ENCODE measurements at regions of chr5 and their contacts with region 1.

Region 1: DNA sequence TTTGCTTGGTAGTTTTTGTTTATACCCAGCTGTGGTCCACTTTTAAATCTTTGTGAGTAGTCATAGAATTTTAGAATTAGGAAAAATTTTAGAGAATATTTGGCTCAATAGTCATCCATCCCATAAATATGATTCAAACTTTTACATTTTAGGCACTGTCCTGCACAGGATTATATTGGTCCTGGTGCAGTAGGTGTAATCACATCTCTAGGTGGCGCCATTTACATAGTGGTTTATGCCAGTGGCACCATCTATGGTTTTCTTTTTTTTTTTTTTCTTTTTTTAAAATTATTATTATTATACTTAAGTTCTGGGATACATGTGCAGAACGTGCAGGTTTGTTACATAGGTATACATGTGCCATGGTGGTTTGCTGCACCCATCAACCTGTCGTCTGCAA is 260.7 kb upstream of the KCNN2 start:
- DNase-seq: peak; percentile 63
- H3K4me3 Mint-ChIP-seq: no peak overlapping the region
- H3K27ac Mint-ChIP-seq: no peak overlapping the region
- H3K4me1 Mint-ChIP-seq: no peaks in the 10 kb centered on the region
- H3K27me3 Mint-ChIP-seq: peaks cover 35% of the 10 kb centered on the region
- CTCF ChIP-seq: peak; percentile 62

Region 2: GRCh38 chr5:113612060-113612496 is 489.1 kb before region 1 on chr5:
- CTCF ChIA-PET with region 1: no interaction called
- intact Hi-C with region 1: loop called (anchors 5 kb)
- DNase-seq: no peak
- H3K4me3 Mint-ChIP-seq: no peak overlapping the region
- H3K27ac Mint-ChIP-seq: no peak overlapping the region
- H3K4me1 Mint-ChIP-seq: no peaks in the 10 kb centered on the region
- H3K27me3 Mint-ChIP-seq: peaks cover 36% of the 10 kb centered on the region
- CTCF ChIP-seq: peak; percentile 35

Region 3: DNA sequence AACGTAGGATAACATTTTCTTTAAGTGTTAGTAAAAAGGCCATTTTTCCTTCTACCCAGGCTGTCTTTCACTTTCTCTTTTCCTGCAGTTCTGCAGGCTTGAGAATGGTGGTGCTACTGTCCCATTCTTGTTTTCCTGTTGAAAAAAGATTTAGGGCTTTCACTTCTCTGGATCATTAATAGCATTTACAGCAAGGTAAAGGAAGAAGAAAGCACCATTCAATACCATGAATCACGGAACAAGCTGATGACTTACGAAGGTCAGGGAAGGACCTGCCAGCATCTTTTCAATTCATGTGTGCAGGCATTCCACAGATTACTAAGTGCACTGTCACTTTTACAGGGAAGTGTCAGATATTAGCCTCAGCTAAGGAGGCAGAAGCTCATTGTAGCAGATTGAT is 294.9 kb before region 1 on chr5:
- CTCF ChIA-PET with region 1: no interaction called
- intact Hi-C with region 1: loop called (anchors 5 kb)
- DNase-seq: peak; percentile 22
- H3K4me3 Mint-ChIP-seq: peak overlapping the region; percentile 25
- H3K27ac Mint-ChIP-seq: no peak overlapping the region
- H3K4me1 Mint-ChIP-seq: peaks cover 17% of the 10 kb centered on the region
- H3K27me3 Mint-ChIP-seq: no peaks in the 10 kb centered on the region
- CTCF ChIP-seq: peak; percentile 33

Region 4: GRCh38 chr5:114305402-114306211 is 204.5 kb after region 1 on chr5:
- CTCF ChIA-PET with region 1: no interaction called
- intact Hi-C with region 1: loop called (anchors 1 kb)
- DNase-seq: peak; percentile 17
- H3K4me3 Mint-ChIP-seq: no peak overlapping the region
- H3K27ac Mint-ChIP-seq: no peak overlapping the region
- H3K4me1 Mint-ChIP-seq: no peaks in the 10 kb centered on the region
- H3K27me3 Mint-ChIP-seq: peaks cover 14% of the 10 kb centered on the region
- CTCF ChIP-seq: peak; percentile 38

Region 5: GRCh38 chr5:114361724-114362196 is 260.6 kb after region 1 on chr5 and contains the start of gene KCNN2:
- CTCF ChIA-PET with region 1: no interaction called
- intact Hi-C with region 1: loop called (anchors 1 kb)
- DNase-seq: peak; percentile 86
- H3K4me3 Mint-ChIP-seq: peak within 1 kb of the TSS; percentile 99
- H3K27ac Mint-ChIP-seq: peak within 1 kb of the TSS; percentile 87
- H3K4me1 Mint-ChIP-seq: no peaks in the 10 kb centered on the region
- H3K27me3 Mint-ChIP-seq: peaks cover 35% of the 10 kb centered on the region
- CTCF ChIP-seq: no peak
- total RNA-seq, gene KCNN2: 1.2 and 2.0 TPM in 2 replicates

Region 6: DNA sequence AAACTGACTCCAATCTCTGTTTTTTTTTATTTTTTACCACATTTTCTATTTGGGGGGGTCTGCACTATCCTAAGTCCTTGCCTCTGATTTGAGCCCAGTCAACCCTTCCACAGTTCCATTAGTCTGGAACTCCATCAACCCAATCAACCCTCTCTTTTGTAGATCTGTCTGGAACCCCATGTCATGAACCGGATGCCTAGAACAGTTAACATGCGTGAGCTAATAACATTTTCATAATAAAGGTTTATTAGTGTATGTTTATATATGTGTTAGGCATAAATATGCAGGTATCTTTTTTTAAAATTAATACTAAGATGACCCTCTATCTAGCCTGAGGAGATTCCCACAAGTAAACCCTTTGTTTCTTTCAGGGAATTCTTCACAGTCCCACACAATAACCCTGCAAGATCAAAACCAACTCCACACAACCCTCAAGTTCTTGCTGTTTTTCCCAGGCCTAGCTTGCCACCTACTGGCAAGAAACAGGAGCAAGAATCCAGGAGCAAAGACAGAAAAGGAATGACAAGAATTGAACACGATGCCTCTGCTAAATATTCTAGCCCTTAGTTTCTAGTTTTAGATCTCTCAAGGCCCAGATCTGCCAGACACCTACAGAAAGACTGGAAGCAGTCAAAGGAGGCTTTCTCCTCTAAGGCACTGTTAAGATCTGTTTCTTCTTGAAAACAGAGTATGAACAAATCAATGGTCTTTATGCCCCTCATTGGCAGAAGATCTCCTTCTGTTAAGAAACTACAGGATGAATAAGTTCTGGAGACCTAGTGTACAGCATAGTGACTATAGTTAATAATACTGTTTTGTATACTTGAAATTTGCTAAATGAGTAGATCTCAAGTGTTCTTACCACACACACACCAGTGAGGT is 968.2 kb after region 1 on chr5:
- CTCF ChIA-PET with region 1: no interaction called
- intact Hi-C with region 1: loop called (anchors 2 kb)
- DNase-seq: peak; percentile 51
- H3K4me3 Mint-ChIP-seq: no peak overlapping the region
- H3K27ac Mint-ChIP-seq: no peak overlapping the region
- H3K4me1 Mint-ChIP-seq: peaks cover 7% of the 10 kb centered on the region
- H3K27me3 Mint-ChIP-seq: no peaks in the 10 kb centered on the region
- CTCF ChIP-seq: no peak